ENCODE measurements at regions of chr15 and their contacts with region 1.

Region 1: GRCh38 chr15:79380755-79381497 is 51.2 kb upstream of the MINAR1 start:
- DNase-seq: peak; percentile 71
- H3K4me3 ChIP-seq: no peak overlapping the region
- H3K27ac ChIP-seq: no peak overlapping the region
- H3K4me1 ChIP-seq: no peaks in the 10 kb centered on the region
- H3K27me3 ChIP-seq: no peaks in the 10 kb centered on the region
- CTCF ChIP-seq: peak; percentile 92

Region 2: GRCh38 chr15:79853458-79854328 is 472.8 kb after region 1 on chr15:
- intact Hi-C with region 1: loop called (anchors 5 kb)
- DNase-seq: peak; percentile 29
- H3K4me3 ChIP-seq: no peak overlapping the region
- H3K27ac ChIP-seq: no peak overlapping the region
- H3K4me1 ChIP-seq: no peaks in the 10 kb centered on the region
- H3K27me3 ChIP-seq: no peaks in the 10 kb centered on the region
- CTCF ChIP-seq: peak; percentile 93

Measured in left ventricle myocardium inferior (tissue), 1 donor.